ENCODE measurements at regions of chr10 and their contacts with region 1.

Region 1: DNA sequence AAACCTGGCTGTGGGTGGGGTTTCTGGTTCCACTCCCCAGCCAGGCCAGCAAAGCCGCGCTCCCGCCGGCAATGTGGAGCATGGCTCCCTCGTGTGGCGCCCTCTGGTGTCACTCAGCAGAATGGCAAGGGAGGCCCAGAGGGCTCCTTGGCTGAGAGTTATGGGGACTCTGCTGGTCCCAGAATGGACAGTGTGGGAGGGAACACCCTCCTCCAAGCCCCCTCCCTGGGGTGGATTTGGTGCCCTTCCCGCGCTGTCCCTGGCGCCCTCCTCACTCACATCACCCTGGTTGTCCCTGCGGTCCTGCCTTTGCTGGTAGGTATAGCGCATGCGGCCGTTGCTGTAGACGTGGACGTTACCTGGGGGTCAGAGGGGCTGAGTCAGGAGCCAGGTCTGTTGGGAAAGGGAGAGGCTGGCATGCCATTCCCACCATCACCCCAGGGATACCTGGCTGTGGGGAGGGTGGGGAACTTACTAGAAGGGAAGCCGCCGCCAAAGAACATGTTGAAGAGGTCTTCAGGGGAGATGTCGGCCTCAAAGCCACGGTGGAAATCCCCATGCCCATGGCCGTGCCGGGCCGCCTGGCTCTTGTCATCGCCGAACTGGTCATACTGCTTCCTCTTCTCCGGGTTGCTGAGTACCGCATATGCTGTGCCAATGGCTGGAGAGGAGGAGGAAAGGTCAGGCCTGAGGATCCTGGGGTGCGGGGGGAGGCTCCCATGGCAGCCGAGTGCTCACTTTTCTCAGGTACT is 14.0 kb downstream of the DNAJB12 start:
- DNase-seq: peak in 1 of 2 donors; percentile 76
- ATAC-seq: peak; percentile 52

Region 2: DNA sequence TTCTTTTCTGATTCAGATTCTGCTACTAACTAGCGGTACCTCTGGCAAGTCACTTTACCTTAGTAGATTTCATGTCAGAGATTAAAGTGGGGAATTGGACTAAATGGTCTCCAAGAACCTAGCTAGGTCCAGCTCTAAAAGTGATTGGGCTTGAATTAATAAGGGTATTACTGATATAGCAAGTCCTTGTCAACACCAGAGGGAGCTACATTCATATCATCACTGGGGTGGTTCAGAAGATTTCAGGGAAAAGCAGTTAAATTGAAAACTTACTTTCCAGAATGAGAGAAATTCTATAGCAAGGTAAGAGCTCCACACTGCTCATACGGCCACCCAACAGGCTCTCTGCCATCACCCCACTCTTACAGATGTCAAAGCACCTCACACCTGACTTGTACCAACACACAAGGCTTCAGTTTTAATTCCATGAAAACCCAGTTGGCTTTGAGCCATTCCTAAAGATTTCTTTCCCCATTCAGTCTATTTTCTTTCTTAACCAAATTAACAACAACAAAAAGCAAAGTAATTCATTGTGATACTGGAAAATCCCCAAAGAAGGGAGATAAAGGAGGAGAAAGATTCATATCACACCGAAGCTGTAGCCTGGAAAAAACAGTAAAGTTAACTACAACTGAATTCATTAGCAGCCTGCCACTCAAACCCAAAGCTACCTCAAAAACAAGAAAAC is 214.4 kb before region 1 on chr10:
- intact Hi-C with region 1: loop called in 1 of 2 experiments (anchors 10 kb)
- DNase-seq: no peak
- ATAC-seq: no peak